A549 (cell line): ENCODE measurements at regions of chr17 and their contacts with region 1.

Region 1: GRCh38 chr17:76408052-76408849 is 23.8 kb downstream of the SPHK1 start:
- DNase-seq: peak; percentile 73 to 83
- ATAC-seq: peak; percentile 76 to 86
- H3K4me3 ChIP-seq: no peak overlapping the region
- H3K27ac ChIP-seq: no peak overlapping the region
- H3K4me1 ChIP-seq: no peaks in the 10 kb centered on the region
- CTCF ChIP-seq: peak; percentile 98
- EP300 ChIP-seq: no peak
- POLR2A ChIP-seq: no peak
- RAD21 ChIP-seq: peak; percentile 90 to 92

Region 2: DNA sequence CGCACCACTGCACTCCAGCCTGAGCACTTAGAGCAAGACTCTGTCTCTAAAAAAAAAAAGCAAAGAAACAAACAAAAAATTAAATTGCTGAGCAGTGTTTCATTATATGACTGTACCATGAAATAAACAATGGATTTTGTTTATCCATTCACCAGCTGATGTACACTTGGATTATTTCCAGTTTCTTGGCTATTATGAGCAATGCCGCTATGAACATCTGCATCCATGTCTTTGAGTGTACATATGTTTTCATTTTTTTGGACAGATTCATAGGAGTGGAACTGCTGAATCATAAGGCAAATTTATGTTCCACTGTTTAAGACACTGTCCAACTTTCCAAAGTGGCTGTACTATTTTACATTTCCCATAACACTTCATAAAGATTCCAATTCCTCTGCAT is 175.9 kb before region 1 on chr17:
- CTCF ChIA-PET with region 1: no interaction called
- POLR2A ChIA-PET with region 1: no interaction called
- DNase-seq: no peak
- ATAC-seq: peak in 1 of 2 experiments; percentile 62; a peak in 2 of 6 replicates
- H3K4me3 ChIP-seq: no peak overlapping the region
- H3K27ac ChIP-seq: no peak overlapping the region
- H3K4me1 ChIP-seq: peaks cover 22% of the 10 kb centered on the region
- CTCF ChIP-seq: no peak
- EP300 ChIP-seq: no peak
- POLR2A ChIP-seq: no peak
- RAD21 ChIP-seq: no peak

Region 3: DNA sequence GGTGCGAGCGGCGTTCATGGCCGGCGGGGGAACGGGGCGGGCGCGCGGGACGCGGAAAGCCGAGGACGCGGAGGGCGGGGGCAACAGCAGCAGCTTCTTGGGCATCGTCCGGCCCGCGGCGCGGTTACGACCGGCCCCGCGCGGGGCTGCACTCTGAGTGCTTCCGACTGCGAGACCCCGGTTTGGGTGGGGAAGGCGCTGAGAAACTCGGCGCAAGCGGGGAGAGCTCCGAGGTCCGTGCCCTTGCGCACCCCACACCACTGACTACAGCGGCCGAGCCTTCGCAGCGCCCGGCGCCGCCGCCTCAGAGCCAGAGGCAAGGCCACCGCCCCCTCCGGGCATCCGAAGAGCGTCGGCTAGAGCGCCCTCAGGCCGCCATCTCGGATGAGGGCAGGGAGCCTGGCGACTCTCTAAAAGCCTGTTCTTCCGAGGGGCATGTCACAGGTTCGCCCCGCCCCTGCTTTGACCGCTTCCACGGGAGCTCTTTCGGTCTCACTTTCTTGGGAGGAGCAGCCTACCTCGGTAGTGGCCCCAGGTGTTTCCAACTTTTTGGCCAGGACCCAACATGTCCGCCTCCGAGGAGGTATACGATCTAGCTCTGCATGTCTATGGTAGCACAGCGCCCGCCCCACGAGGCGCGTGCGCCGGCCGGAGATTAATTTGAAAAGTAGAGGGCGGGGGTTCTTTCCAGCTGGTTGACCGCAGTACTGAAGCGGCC is 54.5 kb before region 1 on chr17 and contains the start of gene PRPSAP1:
- CTCF ChIA-PET with region 1: interaction called, 899 read pairs
- POLR2A ChIA-PET with region 1: no interaction called
- DNase-seq: peak; percentile 95 to 98
- ATAC-seq: peak; percentile 97 to 98
- H3K4me3 ChIP-seq: peak within 1 kb of the TSS; percentile 83
- H3K27ac ChIP-seq: peak within 1 kb of the TSS; percentile 93 to 97
- H3K4me1 ChIP-seq: peaks cover 18% of the 10 kb centered on the region; the same call in 2 of the 3 replicates
- CTCF ChIP-seq: no peak
- EP300 ChIP-seq: no peak; a peak in 1 of 5 replicates
- POLR2A ChIP-seq: peak; percentile 98
- RAD21 ChIP-seq: no peak
- polyA plus RNA-seq, gene PRPSAP1: 80.9 and 92.1 TPM in 2 replicates

Region 4: GRCh38 chr17:76427501-76428231 is 19.4 kb after region 1 on chr17:
- CTCF ChIA-PET with region 1: interaction called, 1,094 read pairs
- POLR2A ChIA-PET with region 1: no interaction called
- DNase-seq: no peak
- ATAC-seq: peak; percentile 9 to 48; a peak in 3 of 6 replicates
- H3K4me3 ChIP-seq: no peak overlapping the region
- H3K27ac ChIP-seq: peak overlapping the region in 1 of 2 experiments; percentile 1; a peak in 1 of 6 replicates
- H3K4me1 ChIP-seq: peaks cover 12% of the 10 kb centered on the region
- CTCF ChIP-seq: no peak
- EP300 ChIP-seq: no peak
- POLR2A ChIP-seq: no peak
- RAD21 ChIP-seq: no peak

Region 5: DNA sequence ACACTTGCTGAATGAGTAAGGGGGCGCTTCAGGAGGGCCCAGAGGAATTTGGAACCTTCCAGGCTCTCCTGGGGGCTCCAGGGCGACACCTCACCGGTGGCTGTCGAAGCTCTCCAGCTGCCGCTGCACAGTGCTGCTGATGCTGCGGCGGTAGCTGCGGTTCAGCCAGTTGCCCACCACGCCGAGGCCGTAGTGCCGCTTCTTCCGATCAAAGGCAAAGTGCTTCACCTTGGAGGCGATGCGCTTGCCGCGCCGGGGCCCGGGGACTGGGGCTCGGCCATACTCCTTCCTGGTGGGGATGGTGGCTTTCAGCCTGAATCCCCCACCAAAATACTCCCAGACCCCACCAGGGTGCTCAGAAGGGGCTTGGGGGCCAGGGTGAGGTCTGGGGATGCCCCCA is 68.5 kb after region 1 on chr17:
- CTCF ChIA-PET with region 1: interaction called, 12 read pairs
- POLR2A ChIA-PET with region 1: no interaction called
- DNase-seq: no peak
- ATAC-seq: no peak
- H3K4me3 ChIP-seq: no peak overlapping the region
- H3K27ac ChIP-seq: no peak overlapping the region
- H3K4me1 ChIP-seq: no peaks in the 10 kb centered on the region
- CTCF ChIP-seq: no peak
- EP300 ChIP-seq: no peak
- POLR2A ChIP-seq: no peak
- RAD21 ChIP-seq: no peak

Region 6: DNA sequence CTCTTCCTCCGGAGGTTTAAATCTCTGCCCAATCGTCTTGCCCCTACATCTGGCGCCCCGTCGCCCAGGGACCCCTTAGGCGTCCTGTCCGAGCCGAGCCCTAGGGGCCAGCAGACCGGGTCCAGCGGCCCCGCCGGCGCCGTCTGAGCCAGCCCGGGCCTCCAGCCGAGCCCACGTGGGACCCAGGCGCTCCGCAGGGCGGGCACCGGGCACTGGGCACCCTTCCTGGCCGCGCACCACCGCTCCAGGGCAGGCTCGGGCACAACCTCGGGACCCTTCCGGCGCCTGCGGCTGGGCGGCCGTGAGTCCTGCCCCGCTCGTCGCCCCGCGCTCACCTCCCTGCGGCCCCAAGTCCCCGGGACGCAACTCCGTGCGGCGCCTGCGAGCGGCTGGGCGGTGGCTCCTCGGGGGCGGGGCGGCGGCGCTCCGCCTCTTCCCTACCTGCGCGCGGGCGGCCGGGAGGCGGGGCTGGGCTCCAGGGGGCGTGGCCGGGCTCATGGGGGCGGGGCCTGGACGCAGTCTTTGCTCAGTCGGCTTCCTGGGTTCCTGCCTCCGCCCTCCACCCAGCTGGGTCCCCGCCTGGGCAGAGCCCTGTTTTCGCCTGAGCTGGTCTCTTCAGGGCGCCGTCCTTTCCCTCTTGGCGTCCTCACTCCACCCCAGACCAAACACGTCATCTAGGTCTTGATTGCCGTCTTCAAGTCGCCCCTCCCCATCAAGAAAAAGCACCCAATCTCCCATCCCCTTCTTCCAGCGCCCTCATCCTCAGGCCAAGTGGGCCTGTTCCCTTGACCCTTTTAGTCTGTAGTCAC is 93.0 kb after region 1 on chr17 and contains the start of gene RHBDF2:
- CTCF ChIA-PET with region 1: interaction called, 65 read pairs
- POLR2A ChIA-PET with region 1: no interaction called
- DNase-seq: peak; percentile 87 to 97
- ATAC-seq: peak; percentile 73 to 81
- H3K4me3 ChIP-seq: peak within 1 kb of the TSS; percentile 81
- H3K27ac ChIP-seq: peak within 1 kb of the TSS; percentile 83 to 96
- H3K4me1 ChIP-seq: peaks cover 41% of the 10 kb centered on the region
- CTCF ChIP-seq: no peak
- EP300 ChIP-seq: no peak
- POLR2A ChIP-seq: peak; percentile 82
- RAD21 ChIP-seq: no peak
- polyA plus RNA-seq, gene RHBDF2: 14.0 and 19.9 TPM in 2 replicates

Region 7: DNA sequence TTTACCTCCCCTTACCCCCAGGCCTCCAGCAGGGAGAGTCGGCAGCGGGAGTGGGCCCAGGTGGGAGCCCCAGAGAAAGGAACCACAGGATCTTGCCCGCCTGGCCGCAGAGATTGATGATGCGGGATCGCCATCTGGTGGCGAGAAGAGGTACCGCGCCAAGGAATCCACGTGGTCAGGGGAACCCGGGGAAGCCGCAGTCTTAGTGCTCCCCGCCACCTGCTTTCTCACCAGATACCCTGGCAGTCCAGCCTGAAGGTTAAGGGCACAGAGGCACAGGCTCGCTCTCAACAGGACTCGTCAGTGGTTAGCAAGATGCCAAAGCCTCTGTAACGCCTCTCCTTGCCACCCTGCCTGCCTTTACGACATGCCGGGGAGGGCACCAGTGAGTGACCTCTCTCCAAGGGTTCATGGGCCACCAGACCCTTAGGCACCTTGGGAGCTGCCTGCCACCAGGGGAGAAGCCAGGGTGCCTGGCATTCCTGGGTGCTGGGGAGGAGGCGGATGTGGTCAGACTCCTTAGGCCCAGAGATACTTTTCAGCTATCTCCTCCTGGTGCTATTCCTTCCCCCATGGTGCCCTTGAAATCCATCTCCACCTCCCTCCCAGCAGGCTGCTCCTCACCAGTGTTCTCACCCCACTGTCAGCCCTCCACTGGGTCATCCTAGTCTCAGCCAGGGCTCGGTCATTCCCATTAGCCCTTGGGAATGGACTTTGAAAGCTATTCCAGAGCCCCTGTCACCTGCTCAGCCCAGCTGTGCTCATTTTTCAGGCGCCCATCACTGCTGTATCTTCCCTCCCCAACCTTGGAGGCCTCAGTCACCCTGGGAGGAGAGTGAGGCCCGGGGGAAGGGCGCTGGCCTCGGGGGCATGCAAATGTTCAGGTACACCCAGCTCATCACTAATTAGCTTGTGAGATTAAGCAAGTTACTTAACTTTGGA is 98.4 kb after region 1 on chr17:
- CTCF ChIA-PET with region 1: interaction called, 65 read pairs
- POLR2A ChIA-PET with region 1: no interaction called
- DNase-seq: peak; percentile 71 to 95
- ATAC-seq: peak; percentile 80 to 90
- H3K4me3 ChIP-seq: no peak overlapping the region
- H3K27ac ChIP-seq: peak overlapping the region; percentile 52 to 73; a peak in 5 of 6 replicates
- H3K4me1 ChIP-seq: peaks cover 9% of the 10 kb centered on the region
- CTCF ChIP-seq: peak; percentile 98
- EP300 ChIP-seq: no peak
- POLR2A ChIP-seq: no peak
- RAD21 ChIP-seq: peak; percentile 99